ENCODE measurements at regions of chr16 and their contacts with region 1.

Region 1: GRCh38 chr16:22190776-22191531 is 15.1 kb upstream of the EEF2K start:
- DNase-seq: peak; percentile 100
- H3K4me3 ChIP-seq: peak overlapping the region; percentile 70
- H3K27ac ChIP-seq: peak overlapping the region; percentile 98
- H3K27me3 ChIP-seq: no peaks in the 10 kb centered on the region
- CTCF ChIP-seq: no peak

Region 2: GRCh38 chr16:21952793-21953540 is 238.0 kb before region 1 on chr16 and contains the start of gene UQCRC2:
- CTCF ChIA-PET with region 1: interaction called, 39 read pairs
- POLR2A ChIA-PET with region 1: interaction called, 3 read pairs
- DNase-seq: peak; percentile 84
- H3K4me3 ChIP-seq: peak within 1 kb of the TSS; percentile 76
- H3K27ac ChIP-seq: peak within 1 kb of the TSS; percentile 92
- H3K27me3 ChIP-seq: no peaks in the 10 kb centered on the region
- CTCF ChIP-seq: no peak
- polyA plus RNA-seq, gene UQCRC2: 209 and 245 TPM in 2 replicates

Region 3: DNA sequence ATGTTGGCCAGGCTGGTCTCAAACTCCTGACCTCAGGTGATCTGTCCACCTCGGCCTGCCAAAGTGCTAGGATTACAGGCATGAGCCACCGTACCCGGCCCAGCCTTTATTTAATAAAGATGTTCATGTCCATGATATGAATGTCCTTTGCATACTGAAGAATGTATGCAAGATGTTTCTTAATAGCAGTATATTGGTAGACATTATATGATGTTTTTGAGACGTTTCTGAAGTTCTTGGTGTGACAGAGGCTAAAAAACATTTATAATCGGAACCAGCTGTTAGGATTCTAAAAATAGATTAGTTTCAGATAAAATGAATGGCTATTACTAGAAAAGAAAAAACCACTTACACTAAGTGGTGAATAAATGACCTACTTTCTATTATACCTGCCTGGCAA is 201.8 kb before region 1 on chr16:
- CTCF ChIA-PET with region 1: interaction called, 25 read pairs
- POLR2A ChIA-PET with region 1: no interaction called
- DNase-seq: no peak
- H3K4me3 ChIP-seq: no peak overlapping the region
- H3K27ac ChIP-seq: no peak overlapping the region
- H3K27me3 ChIP-seq: no peaks in the 10 kb centered on the region
- CTCF ChIP-seq: no peak

Region 4: DNA sequence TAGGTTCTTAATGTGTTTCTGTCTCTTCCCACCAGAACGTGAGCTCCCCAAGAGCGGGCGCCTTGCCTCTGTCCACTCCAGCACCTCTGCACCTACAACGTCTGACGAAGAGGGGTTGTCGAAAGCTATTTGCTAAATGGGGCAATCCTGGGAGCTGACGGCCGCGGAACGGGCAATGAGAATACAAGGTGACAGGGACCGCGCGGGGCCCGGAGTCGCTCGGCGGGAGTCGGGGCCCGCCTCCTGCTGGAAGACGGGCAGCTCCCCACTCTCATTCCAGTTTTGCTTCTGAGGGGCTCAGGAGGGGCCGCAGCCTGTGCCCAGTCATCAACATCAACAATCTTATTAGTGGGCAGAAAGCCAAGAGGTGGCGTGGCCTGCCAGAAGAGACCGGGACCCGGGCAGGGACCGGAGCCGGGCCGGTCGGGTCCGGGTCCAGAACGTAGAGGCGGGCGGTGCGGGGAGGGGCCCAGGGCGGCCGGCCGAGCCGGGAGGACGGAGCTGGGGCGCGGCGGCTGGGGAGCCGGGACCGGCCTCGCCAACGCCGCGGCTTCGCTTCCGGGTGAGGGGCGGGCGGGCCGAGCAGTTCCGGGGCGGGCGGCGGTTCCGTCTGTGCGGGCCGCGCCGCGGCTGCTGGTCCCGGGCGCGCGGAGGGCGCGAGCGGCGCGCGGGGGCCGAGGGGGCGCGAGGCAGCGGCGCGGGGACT is 183.3 kb before region 1 on chr16 and contains the start of gene MOSMO:
- CTCF ChIA-PET with region 1: interaction called, 187 read pairs
- POLR2A ChIA-PET with region 1: interaction called, 8 read pairs
- DNase-seq: no peak
- H3K4me3 ChIP-seq: peak within 1 kb of the TSS; percentile 77
- H3K27ac ChIP-seq: peak within 1 kb of the TSS; percentile 25
- H3K27me3 ChIP-seq: no peaks in the 10 kb centered on the region
- CTCF ChIP-seq: no peak
- polyA plus RNA-seq, gene MOSMO: 15.6 and 15.8 TPM in 2 replicates

Region 5: GRCh38 chr16:22098405-22099255 is 92.3 kb before region 1 on chr16:
- CTCF ChIA-PET with region 1: interaction called, 16 read pairs
- POLR2A ChIA-PET with region 1: no interaction called
- DNase-seq: no peak
- H3K4me3 ChIP-seq: peak overlapping the region; percentile 8; the same call in 1 of the 2 replicates
- H3K27ac ChIP-seq: no peak overlapping the region
- H3K27me3 ChIP-seq: peaks cover 5% of the 10 kb centered on the region
- CTCF ChIP-seq: peak; percentile 66

Region 6: GRCh38 chr16:22177968-22178934 is 12.7 kb before region 1 on chr16:
- CTCF ChIA-PET with region 1: interaction called, 13 read pairs
- POLR2A ChIA-PET with region 1: no interaction called
- DNase-seq: no peak
- H3K4me3 ChIP-seq: no peak overlapping the region
- H3K27ac ChIP-seq: no peak overlapping the region
- H3K27me3 ChIP-seq: peaks cover 24% of the 10 kb centered on the region
- CTCF ChIP-seq: no peak

Region 7: DNA sequence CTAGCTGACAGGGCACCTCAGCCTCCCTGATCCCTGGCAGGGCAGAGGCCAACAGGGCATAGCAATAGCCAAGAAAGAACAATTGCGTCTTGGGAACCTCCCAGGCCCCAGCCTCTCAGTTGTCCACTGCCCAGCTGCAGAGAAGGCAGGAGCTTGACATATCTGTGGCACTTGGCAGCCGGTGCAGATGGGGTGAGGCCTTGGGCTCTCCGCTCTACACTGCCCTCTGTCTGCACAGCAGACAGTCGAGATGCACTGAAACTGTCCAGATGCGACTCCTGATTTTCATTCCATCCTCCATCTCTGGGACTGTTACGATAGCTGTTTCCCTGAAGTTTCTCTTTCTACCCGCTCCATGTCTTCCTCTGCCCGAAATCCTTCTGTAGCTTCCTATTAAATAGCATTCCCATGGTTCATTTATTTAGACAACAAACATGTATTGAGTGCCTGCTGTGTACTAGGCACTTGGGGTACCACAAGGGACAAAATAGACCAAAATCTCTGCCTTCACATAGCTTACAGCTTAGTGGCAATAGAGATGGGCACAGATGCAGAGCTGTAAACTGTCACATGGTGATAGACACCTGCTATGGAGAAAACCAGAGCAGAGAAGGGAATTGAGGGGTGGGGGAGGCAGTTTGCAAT is 109.6 kb after region 1 on chr16:
- CTCF ChIA-PET with region 1: interaction called, 35 read pairs
- POLR2A ChIA-PET with region 1: no interaction called
- DNase-seq: peak; percentile 30
- H3K4me3 ChIP-seq: no peak overlapping the region
- H3K27ac ChIP-seq: no peak overlapping the region
- H3K27me3 ChIP-seq: no peaks in the 10 kb centered on the region
- CTCF ChIP-seq: peak; percentile 78

Region 8: GRCh38 chr16:22321339-22322001 is 130.5 kb after region 1 on chr16:
- CTCF ChIA-PET with region 1: no interaction called
- POLR2A ChIA-PET with region 1: no interaction called
- DNase-seq: peak; percentile 47
- H3K4me3 ChIP-seq: no peak overlapping the region
- H3K27ac ChIP-seq: no peak overlapping the region
- H3K27me3 ChIP-seq: no peaks in the 10 kb centered on the region
- CTCF ChIP-seq: peak; percentile 92

Measured in AG04450 (cell line).